IMR-90 (cell line): ENCODE measurements at regions of chr3 and their contacts with region 1.

Region 1: GRCh38 chr3:142279965-142280590 is 54.7 kb upstream of the GK5 start:
- DNase-seq: peak; percentile 80
- ATAC-seq: peak; percentile 73
- H3K4me3 ChIP-seq: no peak overlapping the region
- H3K27ac ChIP-seq: no peak overlapping the region
- H3K4me1 ChIP-seq: peaks cover 7% of the 10 kb centered on the region; the same call in 1 of the 2 replicates
- H3K27me3 ChIP-seq: no peaks in the 10 kb centered on the region
- CTCF ChIP-seq: peak; percentile 80
- POLR2A ChIP-seq: no peak
- RAD21 ChIP-seq: peak; percentile 93

Region 2: GRCh38 chr3:141959921-141960554 is 320.0 kb before region 1 on chr3:
- CTCF ChIA-PET with region 1: no interaction called
- POLR2A ChIA-PET with region 1: no interaction called
- dilution Hi-C with region 1: no loop called
- in situ Hi-C with region 1: no loop called
- intact Hi-C with region 1: loop called (anchors 1 kb)
- DNase-seq: peak; percentile 78
- ATAC-seq: peak; percentile 63
- H3K4me3 ChIP-seq: no peak overlapping the region
- H3K27ac ChIP-seq: peak overlapping the region; percentile 85
- H3K4me1 ChIP-seq: peaks cover 15% of the 10 kb centered on the region
- H3K27me3 ChIP-seq: no peaks in the 10 kb centered on the region
- CTCF ChIP-seq: no peak
- POLR2A ChIP-seq: no peak
- RAD21 ChIP-seq: no peak

Region 3: DNA sequence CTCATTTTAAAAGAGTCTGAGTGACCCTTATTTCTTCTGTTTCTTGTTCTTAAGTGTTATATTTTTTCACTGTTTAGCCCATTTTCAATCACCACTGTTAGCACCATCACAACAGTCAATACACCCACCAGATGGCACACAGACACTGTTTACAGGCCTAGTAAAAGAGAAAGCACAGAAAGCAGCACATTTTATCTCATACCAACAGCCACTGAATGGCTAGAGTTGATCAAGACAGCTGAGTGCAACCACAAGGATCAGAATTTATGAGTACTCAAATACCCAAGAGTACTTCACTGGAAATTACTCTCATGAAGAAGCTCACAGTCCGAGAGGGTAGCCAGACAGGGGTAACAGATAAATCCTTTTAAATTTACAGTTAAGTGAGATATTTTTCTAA is 257.7 kb before region 1 on chr3:
- CTCF ChIA-PET with region 1: no interaction called
- POLR2A ChIA-PET with region 1: no interaction called
- dilution Hi-C with region 1: no loop called
- in situ Hi-C with region 1: no loop called
- intact Hi-C with region 1: loop called (anchors 1 kb)
- DNase-seq: no peak
- ATAC-seq: peak; percentile 69
- H3K4me3 ChIP-seq: no peak overlapping the region
- H3K27ac ChIP-seq: no peak overlapping the region
- H3K4me1 ChIP-seq: no peaks in the 10 kb centered on the region
- H3K27me3 ChIP-seq: no peaks in the 10 kb centered on the region
- CTCF ChIP-seq: no peak
- POLR2A ChIP-seq: no peak
- RAD21 ChIP-seq: no peak

Region 4: GRCh38 chr3:142129516-142130171 is 150.4 kb before region 1 on chr3:
- CTCF ChIA-PET with region 1: interaction called, 6 read pairs
- POLR2A ChIA-PET with region 1: no interaction called
- dilution Hi-C with region 1: no loop called
- in situ Hi-C with region 1: loop called (anchors 5 kb)
- intact Hi-C with region 1: loop called (anchors 1 kb)
- DNase-seq: no peak
- ATAC-seq: no peak
- H3K4me3 ChIP-seq: no peak overlapping the region
- H3K27ac ChIP-seq: no peak overlapping the region
- H3K4me1 ChIP-seq: no peaks in the 10 kb centered on the region
- H3K27me3 ChIP-seq: no peaks in the 10 kb centered on the region
- CTCF ChIP-seq: peak; percentile 25; the same call in 1 of the 2 replicates
- POLR2A ChIP-seq: no peak
- RAD21 ChIP-seq: no peak

Region 5: DNA sequence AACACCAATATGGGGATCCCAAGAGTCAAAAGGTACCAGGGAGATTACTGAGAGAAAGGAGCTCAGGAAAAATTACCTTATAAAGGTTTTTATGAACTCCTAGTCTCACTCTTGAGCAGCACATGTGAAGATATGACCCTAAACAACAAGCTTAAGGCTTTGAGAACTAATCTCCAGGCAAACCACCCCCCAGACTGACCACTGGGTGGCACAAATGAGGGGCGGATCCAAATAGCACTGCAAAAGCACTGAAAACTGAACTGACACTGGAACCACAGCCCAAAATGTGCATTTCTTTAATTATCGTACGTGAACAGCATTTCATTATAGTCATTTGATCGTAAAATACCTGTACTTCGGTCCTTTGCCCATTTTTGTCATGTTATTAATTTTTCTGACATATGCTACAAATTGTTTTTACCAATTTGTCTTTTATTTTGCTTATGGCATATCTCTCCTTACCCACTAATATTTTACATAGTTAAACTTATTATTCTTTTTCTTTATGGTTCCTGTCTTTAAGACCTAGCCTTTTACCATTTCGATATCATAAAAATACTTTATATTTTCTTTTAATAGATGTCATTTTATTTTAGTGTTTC is 99.2 kb before region 1 on chr3:
- CTCF ChIA-PET with region 1: interaction called, 5 read pairs
- POLR2A ChIA-PET with region 1: no interaction called
- dilution Hi-C with region 1: no loop called
- in situ Hi-C with region 1: no loop called
- intact Hi-C with region 1: loop called (anchors 1 kb)
- DNase-seq: peak; percentile 34
- ATAC-seq: peak; percentile 75
- H3K4me3 ChIP-seq: no peak overlapping the region
- H3K27ac ChIP-seq: no peak overlapping the region
- H3K4me1 ChIP-seq: no peaks in the 10 kb centered on the region
- H3K27me3 ChIP-seq: no peaks in the 10 kb centered on the region
- CTCF ChIP-seq: peak; percentile 54
- POLR2A ChIP-seq: no peak
- RAD21 ChIP-seq: peak; percentile 61

Region 6: DNA sequence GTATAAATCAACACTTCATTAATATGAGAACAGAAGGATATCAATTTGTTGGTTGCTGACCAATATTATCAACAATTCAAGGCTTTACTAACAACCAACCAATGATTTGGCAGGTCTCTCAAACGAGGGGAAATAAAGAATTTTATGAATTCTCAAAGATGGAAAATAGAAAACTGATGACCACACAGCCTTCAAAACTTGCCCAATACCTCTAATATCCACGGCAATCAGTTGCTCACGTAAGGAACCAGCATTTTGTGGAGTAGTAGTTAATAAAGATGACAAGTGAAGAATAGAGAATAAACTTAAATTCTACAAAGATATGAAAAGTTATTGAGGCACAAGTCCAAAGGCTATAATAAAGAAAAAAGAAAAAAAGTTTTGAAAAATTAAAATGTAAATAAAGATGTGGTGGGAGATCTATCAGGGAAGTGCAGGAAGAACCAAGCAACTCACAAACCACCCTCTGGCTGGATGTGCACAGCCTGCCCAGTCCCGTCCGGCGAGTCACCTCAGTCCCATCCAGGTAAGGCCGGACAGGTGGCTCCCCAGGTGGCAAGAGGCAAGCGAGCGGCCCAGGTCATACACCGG is 55.5 kb before region 1 on chr3:
- CTCF ChIA-PET with region 1: interaction called, 3 read pairs
- POLR2A ChIA-PET with region 1: no interaction called
- dilution Hi-C with region 1: no loop called
- in situ Hi-C with region 1: no loop called
- intact Hi-C with region 1: loop called (anchors 5 kb)
- DNase-seq: no peak
- ATAC-seq: no peak
- H3K4me3 ChIP-seq: peak overlapping the region; percentile 97
- H3K27ac ChIP-seq: peak overlapping the region; percentile 92
- H3K4me1 ChIP-seq: no peaks in the 10 kb centered on the region
- H3K27me3 ChIP-seq: no peaks in the 10 kb centered on the region
- CTCF ChIP-seq: no peak
- POLR2A ChIP-seq: no peak
- RAD21 ChIP-seq: no peak